B cell (primary cell): ENCODE measurements at regions of chr19 and their contacts with region 1.

Region 1: GRCh38 chr19:55279770-55280643 is at the start of gene HSPBP1:
- DNase-seq: peak; percentile 99
- ATAC-seq: peak; percentile 85
- H3K4me3 ChIP-seq: peak within 1 kb of the TSS; percentile 63 to 83 (median 71)
- H3K4me3 Mint-ChIP-seq: peak within 1 kb of the TSS; percentile 99
- H3K27ac ChIP-seq: peak within 1 kb of the TSS; percentile 87 to 96
- H3K27ac Mint-ChIP-seq: peak within 1 kb of the TSS; percentile 99
- H3K4me1 ChIP-seq: peaks cover 56 to 71% of the 10 kb centered on the region in 2 donors
- H3K4me1 Mint-ChIP-seq: peaks cover 68% of the 10 kb centered on the region
- H3K27me3 ChIP-seq: peaks cover 0 to 9% (median 3%) of the 10 kb centered on the region in 4 experiments
- H3K27me3 Mint-ChIP-seq: peaks cover 7% of the 10 kb centered on the region
- CTCF ChIP-seq: no peak
- total RNA-seq, gene HSPBP1: 15.6 and 18.2 TPM in 2 replicates

Region 2: GRCh38 chr19:55189424-55189823 is 90.6 kb before region 1 on chr19:
- CTCF ChIA-PET with region 1: no interaction called
- POLR2A ChIA-PET with region 1: no interaction called
- intact Hi-C with region 1: no loop called
- DNase-seq: no peak
- ATAC-seq: no peak
- H3K4me3 ChIP-seq: no peak overlapping the region
- H3K4me3 Mint-ChIP-seq: no peak overlapping the region
- H3K27ac ChIP-seq: no peak overlapping the region
- H3K27ac Mint-ChIP-seq: no peak overlapping the region
- H3K4me1 ChIP-seq: no peaks in the 10 kb centered on the region
- H3K4me1 Mint-ChIP-seq: no peaks in the 10 kb centered on the region
- H3K27me3 ChIP-seq: peaks cover 0 to 14% (median 0%) of the 10 kb centered on the region in 4 experiments
- H3K27me3 Mint-ChIP-seq: peaks cover 20% of the 10 kb centered on the region
- CTCF ChIP-seq: no peak

Region 3: DNA sequence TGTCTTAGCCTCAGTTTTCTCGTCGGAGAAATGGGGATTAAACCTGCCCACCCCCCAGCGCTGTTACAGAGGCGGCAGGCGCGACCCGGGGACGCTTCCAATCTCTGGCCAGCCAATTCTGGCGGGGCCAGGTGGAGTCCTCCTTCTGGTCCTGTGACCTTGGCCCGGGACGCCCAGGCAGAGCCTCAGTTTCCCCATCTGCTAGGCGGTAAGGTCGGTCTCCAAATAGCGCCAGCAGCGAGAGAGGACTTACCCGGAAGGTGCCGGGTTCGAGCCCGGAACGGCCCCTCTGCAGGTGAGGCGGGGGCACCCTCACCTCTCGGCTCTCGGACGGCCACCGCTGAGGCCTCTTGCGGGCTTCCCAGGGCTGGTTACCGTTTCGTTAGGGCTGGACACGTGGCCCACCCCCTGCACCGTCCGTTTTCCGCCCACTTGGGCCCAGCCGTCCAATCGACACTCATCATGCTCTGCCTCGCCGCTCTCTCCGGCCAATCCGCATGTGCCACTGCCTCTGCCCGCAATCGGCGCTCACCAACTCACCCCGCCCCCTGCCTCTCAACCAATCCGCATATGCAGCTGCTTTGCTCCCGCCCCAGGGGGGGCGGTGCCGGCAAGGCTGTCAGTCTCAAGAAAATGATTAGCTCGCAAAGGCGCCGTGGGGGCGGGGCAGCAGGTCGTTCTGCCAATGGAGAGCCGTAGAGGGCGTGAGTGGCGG is 181.4 kb after region 1 on chr19 and contains the start of gene ISOC2:
- CTCF ChIA-PET with region 1: no interaction called
- POLR2A ChIA-PET with region 1: no interaction called
- intact Hi-C with region 1: loop called (anchors 2 kb)
- DNase-seq: peak; percentile 100
- ATAC-seq: peak; percentile 97
- H3K4me3 ChIP-seq: peak within 1 kb of the TSS; percentile 56 to 98 (median 90)
- H3K4me3 Mint-ChIP-seq: peak within 1 kb of the TSS; percentile 87
- H3K27ac ChIP-seq: peak within 1 kb of the TSS; percentile 73 to 78
- H3K27ac Mint-ChIP-seq: peak within 1 kb of the TSS; percentile 81
- H3K4me1 ChIP-seq: peaks cover 10 to 14% of the 10 kb centered on the region in 2 donors
- H3K4me1 Mint-ChIP-seq: peaks cover 20% of the 10 kb centered on the region
- H3K27me3 ChIP-seq: no peaks in the 10 kb centered on the region
- H3K27me3 Mint-ChIP-seq: no peaks in the 10 kb centered on the region
- CTCF ChIP-seq: no peak
- total RNA-seq, gene ISOC2: 10.0 and 11.1 TPM in 2 replicates